Panc1 (cell line): ENCODE measurements at regions of chr15 and their contacts with region 1.

Region 1: GRCh38 chr15:72176743-72177142 is 20.8 kb downstream of the GRAMD2A start:
- DNase-seq: no peak
- ATAC-seq: no peak
- H3K4me3 ChIP-seq: no peak overlapping the region
- H3K27ac ChIP-seq: no peak overlapping the region
- H3K4me1 ChIP-seq: no peaks in the 10 kb centered on the region
- H3K27me3 ChIP-seq: no peaks in the 10 kb centered on the region
- CTCF ChIP-seq: no peak

Region 2: GRCh38 chr15:72112116-72112515 is 64.6 kb before region 1 on chr15:
- CTCF ChIA-PET with region 1: interaction called, 12 read pairs
- POLR2A ChIA-PET with region 1: no interaction called
- in situ Hi-C with region 1: no loop called
- intact Hi-C with region 1: no loop called
- DNase-seq: no peak
- ATAC-seq: no peak
- H3K4me3 ChIP-seq: no peak overlapping the region
- H3K27ac ChIP-seq: no peak overlapping the region
- H3K4me1 ChIP-seq: peaks cover 30% of the 10 kb centered on the region
- H3K27me3 ChIP-seq: no peaks in the 10 kb centered on the region
- CTCF ChIP-seq: no peak

Region 3: GRCh38 chr15:72199711-72200212 is 23.0 kb after region 1 on chr15:
- CTCF ChIA-PET with region 1: interaction called, 3 read pairs
- POLR2A ChIA-PET with region 1: interaction called, 12 read pairs
- in situ Hi-C with region 1: no loop called
- intact Hi-C with region 1: no loop called
- DNase-seq: peak; percentile 68
- ATAC-seq: peak; percentile 62
- H3K4me3 ChIP-seq: no peak overlapping the region
- H3K27ac ChIP-seq: no peak overlapping the region
- H3K4me1 ChIP-seq: peaks cover 36% of the 10 kb centered on the region
- H3K27me3 ChIP-seq: no peaks in the 10 kb centered on the region
- CTCF ChIP-seq: peak; percentile 96